Right ventricle myocardium superior (tissue), 1 donor: ENCODE measurements at regions of chr1 and their contacts with region 1.

Region 1: DNA sequence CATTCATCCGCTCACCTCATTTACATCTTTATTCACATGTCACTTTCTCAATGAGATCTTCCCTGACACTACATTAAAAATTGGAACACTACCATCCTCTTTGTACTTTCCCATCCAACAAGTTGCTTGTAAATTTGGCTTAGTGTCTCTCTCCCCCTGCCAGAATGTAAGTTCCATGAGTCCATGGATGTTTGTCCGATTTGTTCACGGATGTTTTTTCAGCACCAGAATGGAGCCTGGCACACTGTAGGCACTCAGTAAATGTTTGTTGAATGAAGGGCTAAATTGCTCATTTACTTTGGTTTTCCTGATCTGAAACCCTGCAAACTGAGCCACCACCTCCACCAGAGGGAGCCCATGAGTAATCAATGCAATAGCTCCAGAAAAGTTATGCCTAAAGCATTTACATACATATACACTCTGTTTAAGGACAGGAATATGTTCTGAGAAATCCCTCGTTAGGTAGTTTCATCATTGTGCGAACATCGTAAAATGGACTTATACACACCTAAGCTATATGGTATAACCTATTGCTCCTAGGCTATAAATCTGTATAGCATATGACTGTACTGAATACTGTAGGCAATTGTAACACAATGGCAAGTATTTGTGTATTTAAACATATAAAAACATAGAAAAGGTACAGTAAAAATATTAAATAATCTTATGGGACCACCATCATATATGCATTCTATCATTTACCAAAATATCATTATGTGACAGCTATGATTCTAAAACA is 2.8 kb upstream of the EYA3 start:
- DNase-seq: peak; percentile 76
- ATAC-seq: no peak

Region 2: GRCh38 chr1:28209700-28210099 is 118.5 kb after region 1 on chr1:
- intact Hi-C with region 1: loop called (anchors 2 kb)
- DNase-seq: no peak
- ATAC-seq: no peak